ENCODE measurements at regions of chr4 and their contacts with region 1.

Region 1: GRCh38 chr4:158671915-158672806 is at the start of gene ETFDH:
- DNase-seq: peak; percentile 97
- H3K4me3 Mint-ChIP-seq: peak within 1 kb of the TSS; percentile 96
- H3K27ac Mint-ChIP-seq: peak within 1 kb of the TSS; percentile 94
- H3K4me1 Mint-ChIP-seq: peaks cover 19% of the 10 kb centered on the region
- H3K27me3 Mint-ChIP-seq: no peaks in the 10 kb centered on the region
- total RNA-seq, gene ETFDH: 35.4 to 36.8 TPM

Region 2: DNA sequence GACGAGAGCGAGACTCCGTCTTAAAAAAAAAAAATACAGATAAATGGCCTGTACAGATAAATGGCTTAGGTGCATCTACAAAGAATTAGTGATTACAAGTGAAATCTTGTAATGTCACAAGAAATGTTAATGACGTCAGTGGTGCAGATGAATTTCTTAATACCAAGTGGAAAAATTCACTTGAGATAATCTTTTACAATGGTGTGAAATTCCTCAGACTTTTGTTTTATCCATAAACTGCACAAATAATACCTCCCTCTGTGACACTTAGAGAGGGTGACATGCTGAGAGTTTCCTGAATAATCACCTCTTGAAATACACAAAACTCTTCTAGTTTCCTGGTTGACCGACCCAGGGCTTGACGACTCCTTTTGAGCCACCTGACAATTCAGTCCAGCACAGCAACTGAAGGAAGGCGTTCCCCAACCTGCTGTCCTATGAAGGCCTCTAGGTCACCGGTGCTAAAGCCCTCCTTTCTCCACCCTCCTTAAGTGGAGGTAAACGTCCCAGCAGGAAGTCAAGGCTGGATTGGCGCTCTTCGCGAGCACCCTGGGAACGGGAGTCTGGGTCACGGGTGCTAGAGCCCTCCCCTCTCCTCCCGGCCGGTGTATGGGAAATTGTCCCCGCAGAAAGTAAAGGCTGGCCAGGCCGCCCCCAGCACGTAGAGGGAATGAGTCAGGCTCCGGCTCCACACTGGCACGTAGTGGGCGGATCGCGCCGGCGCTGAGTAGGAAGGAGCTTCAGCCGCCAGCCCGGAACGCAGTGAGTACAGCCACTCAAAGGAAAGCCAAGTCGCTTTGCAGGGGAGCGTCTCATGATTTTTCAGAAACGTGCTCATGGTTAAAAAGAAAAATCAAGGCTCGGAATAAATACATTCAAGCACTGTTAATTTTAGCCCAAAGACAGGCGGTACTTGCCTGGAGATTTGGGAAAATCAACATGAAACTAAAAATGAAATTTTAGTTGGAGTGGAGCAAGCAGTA is 462.0 kb before region 1 on chr4 and contains the start of gene TMEM144:
- CTCF ChIA-PET with region 1: no interaction called
- intact Hi-C with region 1: loop called (anchors 5 kb)
- DNase-seq: peak; percentile 66
- H3K4me3 Mint-ChIP-seq: peak within 1 kb of the TSS; percentile 70
- H3K27ac Mint-ChIP-seq: no peak within 1 kb of the TSS
- H3K4me1 Mint-ChIP-seq: peaks cover 21% of the 10 kb centered on the region
- H3K27me3 Mint-ChIP-seq: peaks cover 26% of the 10 kb centered on the region
- total RNA-seq, gene TMEM144: 0.31 TPM in 1 of 2 experiments, not detected in the other

Region 3: GRCh38 chr4:158535130-158535614 is 137.0 kb before region 1 on chr4:
- CTCF ChIA-PET with region 1: no interaction called
- intact Hi-C with region 1: loop called (anchors 2 kb)
- DNase-seq: peak; percentile 35
- H3K4me3 Mint-ChIP-seq: no peak overlapping the region
- H3K27ac Mint-ChIP-seq: no peak overlapping the region
- H3K4me1 Mint-ChIP-seq: no peaks in the 10 kb centered on the region
- H3K27me3 Mint-ChIP-seq: no peaks in the 10 kb centered on the region

Region 4: GRCh38 chr4:158768555-158769174 is 96.5 kb after region 1 on chr4 and contains the start of gene FNIP2:
- CTCF ChIA-PET with region 1: no interaction called
- intact Hi-C with region 1: loop called (anchors 1 kb)
- DNase-seq: peak; percentile 73
- H3K4me3 Mint-ChIP-seq: peak within 1 kb of the TSS; percentile 96
- H3K27ac Mint-ChIP-seq: peak within 1 kb of the TSS; percentile 90
- H3K4me1 Mint-ChIP-seq: peaks cover 39% of the 10 kb centered on the region
- H3K27me3 Mint-ChIP-seq: no peaks in the 10 kb centered on the region
- total RNA-seq, gene FNIP2: 10.1 to 11.3 TPM

Region 5: GRCh38 chr4:158850800-158851644 is 178.9 kb after region 1 on chr4:
- CTCF ChIA-PET with region 1: interaction called, 3 read pairs
- intact Hi-C with region 1: loop called (anchors 2 kb)
- DNase-seq: no peak
- H3K4me3 Mint-ChIP-seq: no peak overlapping the region
- H3K27ac Mint-ChIP-seq: no peak overlapping the region
- H3K4me1 Mint-ChIP-seq: peaks cover 9% of the 10 kb centered on the region
- H3K27me3 Mint-ChIP-seq: no peaks in the 10 kb centered on the region

Region 6: GRCh38 chr4:158884280-158884679 is 212.1 kb after region 1 on chr4:
- CTCF ChIA-PET with region 1: no interaction called
- intact Hi-C with region 1: no loop called
- DNase-seq: no peak
- H3K4me3 Mint-ChIP-seq: no peak overlapping the region
- H3K27ac Mint-ChIP-seq: no peak overlapping the region
- H3K4me1 Mint-ChIP-seq: no peaks in the 10 kb centered on the region
- H3K27me3 Mint-ChIP-seq: no peaks in the 10 kb centered on the region

Region 7: GRCh38 chr4:159102622-159103383 is 430.6 kb after region 1 on chr4 and contains the start of gene RAPGEF2:
- CTCF ChIA-PET with region 1: no interaction called
- intact Hi-C with region 1: loop called (anchors 1 kb)
- DNase-seq: peak; percentile 91
- H3K4me3 Mint-ChIP-seq: peak within 1 kb of the TSS; percentile 80
- H3K27ac Mint-ChIP-seq: peak within 1 kb of the TSS; percentile 88
- H3K4me1 Mint-ChIP-seq: peaks cover 47% of the 10 kb centered on the region
- H3K27me3 Mint-ChIP-seq: no peaks in the 10 kb centered on the region
- total RNA-seq, gene RAPGEF2: 21.2 to 26.1 TPM

Measured in activated naive CD4-positive, alpha-beta T cell treated with anti-CD3 and anti-CD28 coated beads for 36 hours (primary cell).